IMR-90 (cell line): ENCODE measurements at regions of chr4 and their contacts with region 1.

Region 1: GRCh38 chr4:84966383-84967242 is at the start of gene WDFY3:
- DNase-seq: peak; percentile 89
- ATAC-seq: peak; percentile 95
- H3K4me3 ChIP-seq: peak within 1 kb of the TSS; percentile 73
- H3K27ac ChIP-seq: peak within 1 kb of the TSS; percentile 91
- H3K4me1 ChIP-seq: peaks cover 5% of the 10 kb centered on the region; the same call in 1 of the 2 replicates
- H3K27me3 ChIP-seq: no peaks in the 10 kb centered on the region
- CTCF ChIP-seq: 0 out of 2 replicates have a peak, but pooled peaks have one; percentile 10
- POLR2A ChIP-seq: peak; percentile 53; the same call in 1 of the 2 replicates
- RAD21 ChIP-seq: no peak
- total RNA-seq, gene WDFY3: 58.1 and 59.7 TPM in 2 replicates

Region 2: DNA sequence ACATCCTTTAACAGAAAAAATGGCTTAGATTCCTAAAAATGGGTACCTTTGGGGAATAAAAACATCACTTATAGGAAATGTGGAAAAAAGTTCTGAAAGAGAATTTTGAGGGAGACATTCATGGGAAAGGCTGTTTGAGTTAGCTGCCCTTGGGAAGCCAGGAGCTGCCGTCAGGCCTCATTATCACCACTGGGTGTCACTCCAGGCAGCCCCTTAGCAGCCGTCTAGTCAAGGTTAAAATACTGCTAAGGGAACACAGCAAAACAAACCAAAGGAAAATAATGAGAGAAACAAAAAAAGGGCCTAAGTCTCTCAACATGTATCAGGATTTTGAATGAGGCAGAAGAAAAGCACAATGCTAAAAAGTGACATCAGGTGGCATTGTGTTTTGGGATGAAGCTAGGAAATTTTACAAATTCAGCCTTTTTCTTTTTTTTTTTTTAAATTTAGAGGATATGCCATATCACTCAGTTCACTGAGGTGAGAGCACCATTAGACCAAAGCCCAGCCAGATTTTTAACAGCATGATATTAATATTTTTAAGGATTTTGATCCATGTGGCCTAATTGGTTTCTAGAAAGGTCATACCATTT is 1195.4 kb before region 1 on chr4:
- CTCF ChIA-PET with region 1: no interaction called
- POLR2A ChIA-PET with region 1: no interaction called
- dilution Hi-C with region 1: no loop called
- in situ Hi-C with region 1: no loop called
- intact Hi-C with region 1: loop called (anchors 10 kb)
- DNase-seq: peak; percentile 60
- ATAC-seq: peak; percentile 94
- H3K4me3 ChIP-seq: no peak overlapping the region
- H3K27ac ChIP-seq: no peak overlapping the region
- H3K4me1 ChIP-seq: no peaks in the 10 kb centered on the region
- H3K27me3 ChIP-seq: peaks cover 4% of the 10 kb centered on the region; the same call in 1 of the 2 replicates
- CTCF ChIP-seq: peak; percentile 88
- POLR2A ChIP-seq: no peak
- RAD21 ChIP-seq: peak; percentile 96

Region 3: DNA sequence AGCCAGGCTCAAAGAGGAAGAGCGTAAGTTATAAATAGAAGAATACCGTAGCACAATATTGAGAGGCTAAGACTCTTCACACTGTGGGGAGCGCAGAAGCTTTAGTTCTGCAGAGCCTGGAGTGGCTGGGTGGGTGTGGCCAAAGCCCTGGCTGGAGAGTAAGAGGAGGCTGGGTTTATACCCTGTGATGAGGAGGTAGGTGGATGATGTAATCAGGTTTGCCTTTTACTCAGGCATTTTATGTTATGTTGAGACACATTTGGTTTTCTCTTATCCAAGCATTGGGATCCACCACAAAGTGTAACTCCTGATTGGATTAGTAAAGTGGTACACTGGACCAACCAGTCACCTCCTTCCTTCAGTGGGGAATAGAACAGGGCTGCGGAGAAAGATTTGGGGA is 369.8 kb before region 1 on chr4:
- CTCF ChIA-PET with region 1: no interaction called
- POLR2A ChIA-PET with region 1: no interaction called
- dilution Hi-C with region 1: no loop called
- in situ Hi-C with region 1: loop called (anchors 10 kb)
- intact Hi-C with region 1: no loop called
- DNase-seq: no peak
- ATAC-seq: no peak
- H3K4me3 ChIP-seq: no peak overlapping the region
- H3K27ac ChIP-seq: no peak overlapping the region
- H3K4me1 ChIP-seq: no peaks in the 10 kb centered on the region
- H3K27me3 ChIP-seq: peaks cover 5% of the 10 kb centered on the region
- CTCF ChIP-seq: no peak
- POLR2A ChIP-seq: no peak
- RAD21 ChIP-seq: no peak

Region 4: DNA sequence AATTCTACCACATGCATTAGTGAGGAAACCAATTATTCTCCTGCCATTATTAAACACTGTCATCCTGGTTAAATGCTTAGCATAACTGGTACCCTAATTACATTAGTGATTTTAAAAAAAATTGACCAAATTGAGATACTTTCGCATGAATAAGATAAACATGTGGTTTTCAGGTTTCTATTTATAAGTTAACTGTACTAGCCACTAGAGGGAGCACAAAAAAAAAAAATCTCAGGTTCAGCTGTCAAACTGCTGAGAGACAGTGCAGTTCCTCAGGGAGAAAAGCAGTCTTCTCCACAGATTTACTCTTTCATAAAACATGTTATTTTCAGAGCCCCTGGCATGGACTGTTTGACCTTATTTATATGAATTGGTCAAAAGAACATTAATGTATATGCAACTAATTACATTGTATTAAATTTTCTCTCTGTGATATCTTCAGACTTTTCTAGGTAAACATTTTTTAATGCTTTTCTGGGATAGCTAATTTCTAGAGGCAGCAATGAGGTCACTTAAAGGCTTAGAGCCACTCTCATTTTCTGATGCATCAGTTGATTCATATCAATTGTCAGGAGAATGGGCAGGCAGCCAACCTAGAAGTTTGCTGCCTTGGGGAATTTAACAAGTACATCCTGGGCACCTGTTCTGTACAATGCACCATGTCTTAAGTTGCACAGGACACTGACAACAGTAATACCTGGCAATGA is 216.2 kb before region 1 on chr4:
- CTCF ChIA-PET with region 1: interaction called, 10 read pairs
- POLR2A ChIA-PET with region 1: no interaction called
- dilution Hi-C with region 1: no loop called
- in situ Hi-C with region 1: loop called (anchors 5 kb)
- intact Hi-C with region 1: loop called (anchors 1 kb)
- DNase-seq: peak; percentile 65
- ATAC-seq: peak; percentile 59
- H3K4me3 ChIP-seq: no peak overlapping the region
- H3K27ac ChIP-seq: no peak overlapping the region
- H3K4me1 ChIP-seq: no peaks in the 10 kb centered on the region
- H3K27me3 ChIP-seq: no peaks in the 10 kb centered on the region
- CTCF ChIP-seq: peak; percentile 64
- POLR2A ChIP-seq: no peak
- RAD21 ChIP-seq: peak; percentile 60

Region 5: DNA sequence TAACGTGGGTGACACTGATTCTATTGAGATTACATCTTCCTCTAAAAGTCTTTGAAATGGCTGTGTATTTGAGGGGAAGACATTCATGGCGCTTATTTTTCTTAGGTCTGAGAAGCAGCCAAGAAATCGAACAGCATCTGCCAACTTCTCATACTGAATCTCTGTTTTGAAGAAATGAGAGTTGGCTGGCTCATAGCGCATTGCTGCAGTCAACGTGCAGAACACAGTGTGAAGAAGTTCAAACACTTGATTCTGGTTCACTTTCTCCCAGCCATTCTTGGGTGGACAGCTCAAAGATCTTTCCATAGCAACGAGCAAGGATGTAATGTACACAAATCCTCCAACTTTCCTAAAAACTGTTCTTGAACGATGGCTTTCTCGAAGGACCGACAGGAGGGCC is 156.7 kb before region 1 on chr4:
- CTCF ChIA-PET with region 1: interaction called, 3 read pairs
- POLR2A ChIA-PET with region 1: no interaction called
- dilution Hi-C with region 1: no loop called
- in situ Hi-C with region 1: no loop called
- intact Hi-C with region 1: loop called (anchors 5 kb)
- DNase-seq: peak; percentile 2
- ATAC-seq: no peak
- H3K4me3 ChIP-seq: no peak overlapping the region
- H3K27ac ChIP-seq: no peak overlapping the region
- H3K4me1 ChIP-seq: no peaks in the 10 kb centered on the region; the same call in 1 of the 2 replicates
- H3K27me3 ChIP-seq: no peaks in the 10 kb centered on the region
- CTCF ChIP-seq: no peak
- POLR2A ChIP-seq: no peak
- RAD21 ChIP-seq: no peak

Region 6: GRCh38 chr4:85210359-85210758 is 243.7 kb after region 1 on chr4:
- CTCF ChIA-PET with region 1: no interaction called
- POLR2A ChIA-PET with region 1: no interaction called
- dilution Hi-C with region 1: no loop called
- in situ Hi-C with region 1: no loop called
- intact Hi-C with region 1: no loop called
- DNase-seq: no peak
- ATAC-seq: no peak
- H3K4me3 ChIP-seq: no peak overlapping the region
- H3K27ac ChIP-seq: no peak overlapping the region
- H3K4me1 ChIP-seq: no peaks in the 10 kb centered on the region
- H3K27me3 ChIP-seq: no peaks in the 10 kb centered on the region
- CTCF ChIP-seq: no peak
- POLR2A ChIP-seq: no peak
- RAD21 ChIP-seq: no peak